Sciatic nerve (tissue), 2 donors: ENCODE measurements at regions of chr11 and their contacts with region 1.

Region 1: DNA sequence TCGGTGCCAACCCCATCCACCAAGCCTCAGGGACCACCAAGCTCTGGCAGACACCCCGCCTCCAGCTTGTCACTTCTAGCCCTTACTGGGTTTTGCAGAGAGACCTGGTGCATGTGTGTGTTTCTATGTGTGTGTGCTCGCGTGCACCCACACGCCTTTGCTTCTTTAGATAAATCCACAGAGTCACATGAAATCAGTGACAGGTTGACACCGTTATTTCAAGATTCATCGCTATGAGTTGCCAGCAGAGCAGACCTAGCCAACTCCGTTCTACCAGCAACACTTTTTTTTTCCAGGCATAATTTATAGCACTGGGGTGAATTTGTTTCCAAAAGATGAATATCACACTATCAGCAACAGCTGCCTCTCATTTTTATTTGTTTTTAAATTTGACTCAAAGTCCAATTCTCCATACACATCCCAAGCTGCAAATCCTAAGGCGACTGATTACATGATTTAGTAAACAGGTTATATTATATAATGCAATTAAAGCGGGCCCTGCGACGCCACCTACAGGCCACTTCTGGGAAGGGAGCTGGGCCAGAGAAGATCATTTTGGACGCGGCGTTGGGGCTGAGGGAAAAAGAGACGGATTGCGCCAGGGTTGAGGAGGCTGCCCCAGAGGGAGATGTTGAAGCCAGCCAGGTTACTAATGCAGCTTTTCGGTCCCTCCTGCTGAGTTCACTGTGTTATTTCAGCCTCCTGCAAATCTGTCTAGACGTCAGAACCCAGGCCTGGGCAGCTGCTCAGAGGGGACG is 150.5 kb downstream of the FEZ1 start:
- DNase-seq: peak; percentile 92
- ATAC-seq: peak; percentile 91

Region 2: DNA sequence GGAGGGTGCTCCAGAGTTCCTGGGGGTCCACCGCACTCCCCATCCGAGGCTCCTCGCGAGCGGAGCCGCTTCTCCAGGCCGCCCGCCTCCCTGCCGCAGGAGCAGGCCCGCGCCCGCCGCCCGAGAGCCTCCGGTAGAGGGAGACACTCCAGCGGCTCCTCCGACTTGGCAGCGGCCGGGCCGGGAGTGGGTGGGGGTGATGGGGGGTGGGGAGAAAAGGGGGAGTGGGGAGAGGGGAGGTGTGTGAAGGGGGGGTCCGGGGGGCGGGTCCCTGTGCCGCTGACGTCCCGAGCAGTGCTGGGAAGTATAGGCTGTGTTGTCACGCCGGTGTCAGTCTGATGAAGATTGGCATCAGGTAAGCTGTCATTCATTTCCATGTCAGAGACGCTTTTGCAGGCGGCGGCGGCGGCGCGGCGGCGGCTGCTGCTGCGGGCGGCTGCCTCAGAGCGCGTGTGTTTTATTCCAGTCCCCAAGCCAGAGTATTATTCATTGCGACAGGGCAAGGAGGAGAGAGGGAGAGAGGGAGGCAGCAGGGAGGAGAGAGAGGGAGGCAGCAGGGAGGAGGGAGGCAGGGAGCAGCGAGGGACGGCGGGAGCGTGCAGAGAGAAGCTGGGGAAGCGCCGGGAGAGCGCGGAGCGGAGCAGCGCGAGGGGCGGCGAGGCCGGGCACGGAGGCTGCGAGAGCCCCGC is 181.0 kb before region 1 on chr11 and contains the start of gene PKNOX2:
- intact Hi-C with region 1: loop called (anchors 5 kb)
- DNase-seq: peak; percentile 92
- ATAC-seq: peak; percentile 85
- total RNA-seq, gene PKNOX2: 17.3 TPM

Region 3: GRCh38 chr11:125263268-125263790 is 82.3 kb before region 1 on chr11:
- intact Hi-C with region 1: loop called (anchors 10 kb)
- DNase-seq: peak; percentile 89
- ATAC-seq: peak; percentile 93